ENCODE measurements at regions of chr7 and their contacts with region 1.

Region 1: GRCh38 chr7:94394399-94395140 is at the start of gene COL1A2:
- DNase-seq: peak; percentile 92
- ATAC-seq: peak; percentile 93
- total RNA-seq, gene COL1A2: 443 TPM

Region 2: GRCh38 chr7:94295850-94296249 is 98.7 kb before region 1 on chr7:
- intact Hi-C with region 1: loop called (anchors 5 kb)
- DNase-seq: no peak
- ATAC-seq: peak; percentile 84

Measured in sciatic nerve (tissue), 2 donors.